ENCODE measurements at regions of chr1 and their contacts with region 1.

Region 1: DNA sequence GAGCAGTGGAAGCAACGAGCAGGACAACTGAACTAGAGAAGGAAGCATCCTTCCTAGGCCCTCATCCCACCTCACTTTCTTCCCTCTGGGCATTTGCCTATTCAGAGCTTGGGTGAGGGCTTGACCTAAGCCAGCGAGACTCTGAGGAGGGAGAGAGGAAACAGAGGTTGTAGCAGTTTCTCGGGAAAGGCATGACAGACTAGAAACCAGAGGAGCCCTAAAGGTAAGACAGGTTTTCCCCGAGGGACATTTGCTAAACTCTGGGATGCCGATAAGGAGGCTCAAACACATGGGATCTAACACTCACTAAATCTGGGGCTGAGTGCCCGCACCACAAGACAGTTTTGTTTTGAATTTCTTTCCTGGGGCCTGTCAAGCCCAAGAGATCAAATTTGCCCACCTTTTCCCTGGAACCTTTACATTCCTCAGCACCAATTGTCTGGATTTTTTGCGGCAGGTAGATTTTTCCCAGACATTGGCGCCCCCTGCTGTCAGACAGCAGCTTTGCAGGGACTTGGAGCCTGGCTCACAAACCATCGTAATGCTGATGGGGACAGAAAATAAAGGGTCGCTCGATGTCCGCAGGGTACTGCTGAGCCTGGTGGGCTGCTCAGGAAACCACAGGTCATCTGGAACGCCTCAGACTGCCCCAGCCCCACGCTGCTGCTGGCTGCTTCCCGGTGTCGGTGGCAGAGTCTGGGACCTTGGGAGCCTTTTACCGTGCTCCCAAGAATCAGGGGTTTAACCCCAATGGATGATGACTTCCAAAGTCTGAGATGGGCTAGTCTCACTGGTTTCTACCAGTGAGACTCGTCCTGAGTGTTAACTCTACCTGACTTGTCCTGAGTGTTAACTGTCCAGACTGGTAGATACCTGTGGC is 23.4 kb upstream of the TSPAN2 start:
- DNase-seq: no peak
- H3K4me3 ChIP-seq: no peak overlapping the region
- H3K27ac ChIP-seq: no peak overlapping the region
- H3K27me3 ChIP-seq: no peaks in the 10 kb centered on the region
- CTCF ChIP-seq: peak; percentile 93

Region 2: DNA sequence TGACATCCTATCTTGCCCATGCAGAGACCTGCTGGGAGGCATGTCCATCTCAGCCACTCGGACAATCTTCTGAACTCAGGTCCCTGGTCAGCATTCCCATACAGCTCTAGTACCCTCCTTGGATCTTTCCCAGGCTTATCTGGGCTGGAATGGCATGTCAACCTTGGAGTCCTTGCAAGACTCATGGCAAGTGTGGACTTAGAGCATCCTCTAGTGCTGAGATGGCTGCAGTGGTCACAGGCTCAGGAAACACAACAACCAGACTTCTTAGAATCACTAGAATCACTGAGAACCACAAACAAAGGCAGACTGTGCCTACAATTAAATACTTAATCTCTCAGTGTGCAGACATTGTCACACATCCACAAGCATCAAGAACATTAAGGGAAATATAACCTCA is 156.2 kb before region 1 on chr1:
- CTCF ChIA-PET with region 1: no interaction called
- POLR2A ChIA-PET with region 1: no interaction called
- DNase-seq: no peak
- H3K4me3 ChIP-seq: no peak overlapping the region
- H3K27ac ChIP-seq: no peak overlapping the region
- H3K27me3 ChIP-seq: no peaks in the 10 kb centered on the region
- CTCF ChIP-seq: 0 out of 2 replicates have a peak, but pooled peaks have one; percentile 18

Region 3: GRCh38 chr1:114979278-114979891 is 133.4 kb before region 1 on chr1:
- CTCF ChIA-PET with region 1: interaction called, 42 read pairs
- POLR2A ChIA-PET with region 1: no interaction called
- DNase-seq: peak; percentile 13
- H3K4me3 ChIP-seq: no peak overlapping the region
- H3K27ac ChIP-seq: no peak overlapping the region
- H3K27me3 ChIP-seq: no peaks in the 10 kb centered on the region
- CTCF ChIP-seq: peak; percentile 77

Region 4: DNA sequence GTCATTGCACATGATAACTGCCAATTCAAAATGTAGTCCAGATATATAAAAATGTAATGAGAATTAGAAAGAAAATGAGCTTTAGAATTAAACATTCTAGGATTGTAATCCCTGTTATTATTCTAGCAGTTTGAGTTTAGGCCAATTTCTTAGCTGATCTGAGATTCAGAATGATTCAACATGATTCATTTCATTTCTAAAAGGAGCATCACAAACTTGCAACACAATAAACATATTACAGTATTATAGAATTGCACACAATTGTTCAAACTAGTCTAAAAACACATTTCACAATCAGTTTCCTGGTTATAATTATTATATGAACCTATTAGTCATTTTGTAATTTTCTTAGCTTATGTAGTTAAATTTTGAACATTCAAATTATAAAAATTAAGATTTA is 126.5 kb before region 1 on chr1:
- CTCF ChIA-PET with region 1: interaction called, 22 read pairs
- POLR2A ChIA-PET with region 1: no interaction called
- DNase-seq: no peak
- H3K4me3 ChIP-seq: no peak overlapping the region
- H3K27ac ChIP-seq: no peak overlapping the region
- H3K27me3 ChIP-seq: no peaks in the 10 kb centered on the region
- CTCF ChIP-seq: no peak

Region 5: DNA sequence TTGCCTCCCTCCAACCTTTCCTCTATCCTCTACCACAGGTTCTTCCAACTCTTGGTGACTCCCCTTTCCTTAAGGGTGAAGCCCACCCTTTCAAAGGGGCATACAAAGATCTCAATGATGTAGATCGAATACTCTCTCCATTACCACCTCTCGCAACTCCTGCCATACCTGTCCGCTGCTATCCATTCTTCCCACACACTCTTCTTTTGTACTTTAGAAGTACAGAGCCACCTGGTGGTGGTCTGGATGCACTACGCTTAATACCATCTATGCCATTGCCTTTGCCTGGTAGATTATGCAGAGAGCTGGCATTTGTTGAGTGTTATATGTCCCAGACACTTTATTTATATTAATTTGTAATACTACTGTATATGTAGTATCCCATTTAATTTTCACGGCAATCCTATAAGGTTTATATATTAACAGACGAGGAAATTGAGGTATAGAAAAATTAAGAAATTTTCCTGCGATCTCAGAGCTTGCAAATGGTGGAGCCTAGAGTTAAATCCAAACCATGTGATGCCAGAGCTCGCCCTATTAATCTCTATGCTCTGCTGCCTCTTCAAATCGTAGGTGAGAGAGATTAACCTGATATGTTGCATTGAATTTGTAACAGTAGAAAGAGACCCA is 60.2 kb before region 1 on chr1:
- CTCF ChIA-PET with region 1: interaction called, 23 read pairs
- POLR2A ChIA-PET with region 1: no interaction called
- DNase-seq: no peak
- H3K4me3 ChIP-seq: no peak overlapping the region
- H3K27ac ChIP-seq: no peak overlapping the region
- H3K27me3 ChIP-seq: no peaks in the 10 kb centered on the region
- CTCF ChIP-seq: peak; percentile 87

Region 6: DNA sequence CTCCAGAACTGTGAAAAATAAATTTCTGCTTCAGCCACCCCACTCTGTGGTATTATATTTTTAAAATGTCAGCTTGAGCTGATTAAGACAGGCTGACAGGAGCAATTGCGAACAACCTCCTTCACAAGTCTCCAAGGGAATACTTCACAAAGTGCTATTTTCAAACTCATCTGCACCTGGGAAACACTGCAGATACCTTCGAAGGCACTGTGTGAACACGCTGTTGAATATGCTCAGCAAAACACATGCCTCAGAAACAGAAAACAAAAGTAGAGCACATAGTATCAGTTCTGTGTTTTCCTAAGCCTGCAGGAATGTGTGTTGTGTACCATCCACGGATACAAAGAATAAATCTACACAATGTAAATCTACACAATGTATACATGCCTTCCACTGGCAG is 34.0 kb before region 1 on chr1:
- CTCF ChIA-PET with region 1: interaction called, 10 read pairs
- POLR2A ChIA-PET with region 1: no interaction called
- DNase-seq: no peak
- H3K4me3 ChIP-seq: no peak overlapping the region
- H3K27ac ChIP-seq: no peak overlapping the region
- H3K27me3 ChIP-seq: peaks cover 10% of the 10 kb centered on the region
- CTCF ChIP-seq: no peak

Region 7: DNA sequence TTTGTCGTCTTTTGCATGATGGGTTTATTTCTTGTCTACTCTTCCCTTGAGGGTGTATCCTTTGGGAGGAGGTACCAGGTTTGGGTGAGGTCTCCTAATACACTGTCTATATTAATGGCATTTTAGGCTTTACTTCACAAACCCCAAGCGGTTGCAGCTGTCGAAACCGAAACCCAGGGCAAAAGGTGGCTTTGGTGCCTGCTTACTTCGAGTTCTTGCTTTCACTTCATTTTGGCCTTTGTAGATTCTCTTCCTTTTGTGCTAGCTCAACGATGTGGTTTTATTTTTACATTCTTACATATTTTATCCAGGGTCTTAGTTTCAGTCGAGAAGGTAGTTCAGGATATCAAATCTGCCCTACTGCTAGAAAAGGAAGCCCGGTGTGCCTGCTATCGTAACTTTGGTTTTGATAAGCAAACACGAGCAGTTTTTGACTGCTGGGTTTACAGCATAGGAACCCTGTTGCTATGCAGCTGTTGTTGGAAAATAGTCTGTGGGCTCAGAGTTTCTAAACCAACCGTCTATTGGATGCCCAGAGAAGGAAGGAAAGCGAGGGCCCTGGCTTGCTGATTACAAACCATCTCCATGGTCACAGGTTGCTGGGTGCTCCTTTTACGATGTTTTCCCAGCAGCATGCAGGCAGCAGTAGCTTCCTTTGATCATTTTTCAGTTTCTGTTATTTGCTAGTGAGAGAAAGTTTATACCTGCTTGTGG is 13.6 kb before region 1 on chr1:
- CTCF ChIA-PET with region 1: interaction called, 19 read pairs
- POLR2A ChIA-PET with region 1: no interaction called
- DNase-seq: no peak
- H3K4me3 ChIP-seq: peak overlapping the region; percentile 12; the same call in 1 of the 2 replicates
- H3K27ac ChIP-seq: peak overlapping the region; percentile 21
- H3K27me3 ChIP-seq: peaks cover 2% of the 10 kb centered on the region
- CTCF ChIP-seq: no peak

Region 8: DNA sequence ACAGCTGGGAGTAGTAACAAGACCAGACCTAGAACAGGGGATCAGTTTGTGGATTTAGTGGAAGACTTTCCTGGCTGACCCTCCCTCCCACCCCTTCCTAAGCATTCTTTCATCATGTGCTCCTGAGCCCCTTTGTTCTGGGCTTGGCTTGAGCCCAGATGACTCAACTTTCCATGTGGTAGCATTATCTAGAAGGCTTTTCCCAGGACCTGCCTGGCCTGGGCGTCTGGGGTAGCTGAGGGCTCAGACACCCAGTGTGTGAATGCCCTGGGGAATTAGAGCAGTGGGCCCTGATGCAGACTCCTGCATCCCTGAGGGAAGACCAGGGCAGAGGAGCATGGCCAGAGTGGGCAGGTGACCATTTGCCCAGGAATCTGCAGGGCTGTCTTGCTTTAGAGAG is 20.7 kb after region 1 on chr1:
- CTCF ChIA-PET with region 1: interaction called, 12 read pairs
- POLR2A ChIA-PET with region 1: no interaction called
- DNase-seq: no peak
- H3K4me3 ChIP-seq: no peak overlapping the region
- H3K27ac ChIP-seq: no peak overlapping the region
- H3K27me3 ChIP-seq: no peaks in the 10 kb centered on the region
- CTCF ChIP-seq: no peak

Region 9: DNA sequence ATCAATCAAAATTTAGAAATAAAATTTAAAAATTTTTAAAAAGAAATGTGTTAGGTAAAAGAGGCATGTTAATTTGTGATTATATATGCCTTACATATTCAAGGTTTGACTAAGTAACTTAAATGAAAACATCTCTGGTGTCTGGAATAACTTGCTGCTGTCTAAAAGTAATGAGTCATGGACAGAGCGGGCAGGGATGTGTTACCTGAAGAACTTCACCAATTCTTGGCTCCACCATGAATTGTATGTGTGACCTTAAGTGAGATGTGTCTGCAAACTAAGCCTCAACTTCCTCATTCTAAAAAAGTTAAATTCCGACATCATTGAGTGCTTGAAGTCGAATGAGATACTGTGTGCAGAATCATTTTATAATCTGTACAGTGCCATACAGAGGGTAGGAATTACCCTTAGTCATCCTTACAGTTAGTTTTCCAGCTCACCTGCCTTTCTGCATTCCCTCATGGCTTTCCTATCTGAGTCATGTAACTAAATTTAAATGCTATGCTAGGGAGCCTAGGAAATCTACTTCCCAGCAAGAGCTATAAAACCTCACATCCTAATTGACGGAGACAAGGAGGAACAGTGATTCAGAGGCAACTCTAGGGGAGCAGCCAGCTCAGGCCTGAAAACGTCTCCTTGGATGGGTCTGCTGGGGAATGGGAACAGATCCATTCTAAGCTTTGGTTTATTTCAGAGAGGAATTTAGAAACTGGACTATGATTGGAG is 77.2 kb after region 1 on chr1:
- CTCF ChIA-PET with region 1: no interaction called
- POLR2A ChIA-PET with region 1: no interaction called
- DNase-seq: peak; percentile 64
- H3K4me3 ChIP-seq: no peak overlapping the region
- H3K27ac ChIP-seq: peak overlapping the region; percentile 55
- H3K27me3 ChIP-seq: no peaks in the 10 kb centered on the region
- CTCF ChIP-seq: no peak

Measured in AG04450 (cell line).